BJ (cell line): ENCODE measurements at regions of chr11 and their contacts with region 1.

Region 1: GRCh38 chr11:75399344-75400145 is at the start of gene RPS3:
- DNase-seq: peak; percentile 63
- H3K4me3 ChIP-seq: peak within 1 kb of the TSS; percentile 69
- H3K27me3 ChIP-seq: peaks cover 2% of the 10 kb centered on the region; the same call in 1 of the 2 replicates
- CTCF ChIP-seq: peak; percentile 23; the same call in 1 of the 2 replicates
- polyA plus RNA-seq, gene RPS3: 3,005 and 3,406 TPM in 2 replicates

Region 2: DNA sequence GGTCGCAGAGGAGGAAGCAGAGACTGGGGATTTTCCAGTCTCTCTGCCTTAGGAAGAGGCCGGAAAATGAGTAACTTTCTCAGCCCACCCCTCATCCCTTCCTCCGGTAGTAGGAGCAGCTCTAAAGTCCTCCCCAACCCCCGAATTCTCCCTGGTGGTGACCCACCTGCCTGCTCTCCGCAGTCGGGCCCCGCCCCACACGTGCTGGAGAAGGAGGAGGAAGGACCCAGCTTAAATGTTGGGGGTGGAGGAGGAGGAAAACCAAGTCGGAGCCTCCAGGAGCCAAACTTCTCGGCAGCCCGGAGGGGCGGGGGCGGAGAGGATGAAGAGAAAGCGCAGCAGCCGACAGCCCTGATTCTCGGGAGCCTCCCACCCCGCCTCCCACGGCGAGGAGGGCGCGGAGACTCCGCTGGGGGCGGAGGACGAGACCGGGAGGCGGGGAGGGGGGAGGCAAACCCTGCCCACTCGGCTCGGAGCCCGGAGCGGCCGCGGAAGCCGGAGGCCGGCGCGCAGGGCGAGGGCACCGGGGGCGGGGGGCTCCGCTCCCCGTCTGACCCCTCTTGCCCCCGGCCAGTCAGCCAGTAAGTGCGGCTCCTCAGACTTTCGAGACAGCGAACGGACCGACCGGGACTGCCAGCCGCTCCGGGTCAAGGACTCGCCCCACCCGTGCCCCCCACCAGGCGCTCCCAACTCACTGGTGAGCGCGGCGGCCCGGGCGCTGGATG is 159.1 kb before region 1 on chr11 and contains the start of gene TPBGL:
- CTCF ChIA-PET with region 1: no interaction called
- POLR2A ChIA-PET with region 1: no interaction called
- DNase-seq: no peak
- H3K4me3 ChIP-seq: peak within 1 kb of the TSS; percentile 22
- H3K27me3 ChIP-seq: peaks cover 39% of the 10 kb centered on the region
- CTCF ChIP-seq: no peak
- polyA plus RNA-seq, gene TPBGL: not detected in 2 replicates

Region 3: DNA sequence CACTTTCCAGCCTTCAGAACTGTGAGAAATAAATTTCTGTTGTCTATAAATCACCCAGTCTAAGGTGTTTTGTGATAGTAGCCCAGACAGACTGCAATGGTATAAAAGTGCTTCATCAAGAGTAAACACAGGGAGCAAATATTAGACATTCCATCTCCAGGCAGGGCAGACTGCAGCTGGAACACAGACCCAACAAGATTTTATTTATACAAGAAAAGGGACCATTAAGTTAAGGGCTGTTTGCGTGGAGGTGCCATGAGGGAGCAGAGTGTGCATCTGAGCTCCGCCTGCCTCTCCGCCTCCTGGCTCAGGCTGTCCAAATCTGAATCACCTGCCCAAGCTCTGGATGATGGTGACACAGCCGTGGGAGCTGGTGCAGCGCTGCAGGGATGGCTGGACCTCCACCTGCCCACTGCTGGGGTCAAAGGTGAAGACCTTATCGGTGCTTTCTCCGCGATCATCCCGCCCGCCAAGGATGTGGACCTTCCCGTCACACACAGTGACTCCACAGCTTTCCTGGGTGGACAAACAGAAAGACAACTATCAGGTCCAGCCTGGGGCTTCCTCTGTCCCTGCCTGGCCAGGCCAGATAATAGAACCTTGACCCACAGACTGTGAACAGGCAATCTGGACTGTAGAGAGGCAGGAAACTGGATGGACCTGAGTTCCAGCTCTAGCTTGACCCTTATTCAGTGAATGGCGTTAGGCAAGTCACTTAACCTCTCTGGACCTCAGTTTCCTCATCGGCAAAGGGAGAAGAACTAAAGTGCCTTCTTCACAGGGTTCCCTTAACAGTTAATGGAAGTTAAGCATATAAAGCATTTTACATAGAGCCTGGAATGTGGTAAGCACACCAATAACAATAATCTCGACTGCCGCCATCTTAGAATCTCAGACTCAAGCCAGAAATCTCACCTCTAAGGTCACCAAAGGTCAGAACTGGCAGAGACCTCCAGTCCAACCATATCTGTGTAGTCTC is 23.0 kb after region 1 on chr11:
- CTCF ChIA-PET with region 1: no interaction called
- POLR2A ChIA-PET with region 1: no interaction called
- DNase-seq: no peak
- H3K4me3 ChIP-seq: no peak overlapping the region
- H3K27me3 ChIP-seq: no peaks in the 10 kb centered on the region
- CTCF ChIP-seq: no peak

Region 4: GRCh38 chr11:75436806-75437205 is 37.3 kb after region 1 on chr11:
- CTCF ChIA-PET with region 1: no interaction called
- POLR2A ChIA-PET with region 1: interaction called, 21 read pairs
- DNase-seq: no peak
- H3K4me3 ChIP-seq: no peak overlapping the region
- H3K27me3 ChIP-seq: peaks cover 14% of the 10 kb centered on the region
- CTCF ChIP-seq: no peak

Region 5: GRCh38 chr11:75891947-75892739 is 492.6 kb after region 1 on chr11:
- CTCF ChIA-PET with region 1: no interaction called
- POLR2A ChIA-PET with region 1: no interaction called
- DNase-seq: no peak
- H3K4me3 ChIP-seq: no peak overlapping the region
- H3K27me3 ChIP-seq: no peaks in the 10 kb centered on the region
- CTCF ChIP-seq: no peak